Right ventricle myocardium inferior (tissue), 1 donor: ENCODE measurements at regions of chr4 and their contacts with region 1.

Region 1: DNA sequence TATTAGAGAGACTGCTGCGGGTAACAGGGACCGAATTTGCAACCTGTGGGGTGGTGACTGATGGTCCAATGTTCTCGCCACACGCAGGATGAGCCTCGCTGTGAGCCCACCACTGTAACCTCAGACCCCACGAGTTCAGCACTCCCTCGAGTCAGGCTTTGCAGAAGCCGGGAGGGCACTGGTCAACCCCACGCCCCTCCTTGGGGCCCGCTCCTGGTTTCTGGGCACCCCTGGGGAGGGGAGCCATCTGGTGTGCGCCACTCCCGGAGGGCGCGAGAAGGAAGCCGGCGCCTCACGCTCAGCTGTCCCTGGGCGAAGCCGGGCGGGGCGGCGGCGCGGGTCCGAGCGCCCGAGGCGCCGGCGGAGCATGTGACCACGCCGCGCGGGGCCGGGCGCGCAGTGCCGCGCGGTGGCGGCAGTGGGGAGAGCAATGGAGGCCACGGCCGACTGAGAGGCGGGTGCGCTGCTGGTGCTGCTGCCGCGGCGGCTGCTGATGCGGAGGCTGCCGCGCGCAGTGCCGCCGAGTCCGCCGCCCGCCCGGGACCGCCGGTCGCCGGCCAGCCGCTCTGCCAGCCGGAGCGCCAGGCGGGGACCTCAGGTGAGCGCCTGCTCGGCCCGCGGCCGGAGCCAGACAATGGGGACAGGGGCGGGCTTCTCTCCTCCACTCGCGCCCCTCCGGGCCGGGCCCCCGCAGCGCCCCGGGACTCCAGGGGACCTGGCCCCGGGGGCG is 100.1 kb downstream of the CEP135 start:
- DNase-seq: no peak
- ATAC-seq: peak; percentile 64

Region 2: GRCh38 chr4:55169352-55169961 is 879.4 kb before region 1 on chr4:
- intact Hi-C with region 1: no loop called
- DNase-seq: no peak
- ATAC-seq: no peak

Region 3: GRCh38 chr4:55424791-55425190 is 624.1 kb before region 1 on chr4:
- intact Hi-C with region 1: no loop called
- DNase-seq: no peak
- ATAC-seq: no peak

Region 4: GRCh38 chr4:56158483-56158882 is 109.6 kb after region 1 on chr4:
- intact Hi-C with region 1: no loop called
- DNase-seq: no peak
- ATAC-seq: no peak

Region 5: DNA sequence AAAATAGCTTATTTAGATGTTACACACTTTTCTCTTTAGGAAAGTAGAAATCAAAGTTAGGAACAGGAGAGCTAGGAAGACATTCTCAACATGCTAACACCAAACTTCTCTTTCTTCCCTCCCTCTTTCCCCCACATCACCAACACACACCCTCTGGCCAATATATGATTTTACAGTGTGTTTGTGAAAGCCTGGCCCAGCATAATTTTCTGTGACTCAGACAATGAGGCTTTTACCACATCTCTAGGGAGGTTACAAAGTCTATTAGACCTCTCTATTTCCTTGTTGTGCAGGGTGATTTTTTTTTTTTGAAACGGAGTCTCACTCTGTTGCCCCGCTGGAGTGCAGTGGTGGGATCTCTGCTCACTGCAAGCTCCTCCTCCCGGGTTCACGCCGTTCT is 148.5 kb after region 1 on chr4:
- intact Hi-C with region 1: no loop called
- DNase-seq: no peak
- ATAC-seq: no peak

Region 6: DNA sequence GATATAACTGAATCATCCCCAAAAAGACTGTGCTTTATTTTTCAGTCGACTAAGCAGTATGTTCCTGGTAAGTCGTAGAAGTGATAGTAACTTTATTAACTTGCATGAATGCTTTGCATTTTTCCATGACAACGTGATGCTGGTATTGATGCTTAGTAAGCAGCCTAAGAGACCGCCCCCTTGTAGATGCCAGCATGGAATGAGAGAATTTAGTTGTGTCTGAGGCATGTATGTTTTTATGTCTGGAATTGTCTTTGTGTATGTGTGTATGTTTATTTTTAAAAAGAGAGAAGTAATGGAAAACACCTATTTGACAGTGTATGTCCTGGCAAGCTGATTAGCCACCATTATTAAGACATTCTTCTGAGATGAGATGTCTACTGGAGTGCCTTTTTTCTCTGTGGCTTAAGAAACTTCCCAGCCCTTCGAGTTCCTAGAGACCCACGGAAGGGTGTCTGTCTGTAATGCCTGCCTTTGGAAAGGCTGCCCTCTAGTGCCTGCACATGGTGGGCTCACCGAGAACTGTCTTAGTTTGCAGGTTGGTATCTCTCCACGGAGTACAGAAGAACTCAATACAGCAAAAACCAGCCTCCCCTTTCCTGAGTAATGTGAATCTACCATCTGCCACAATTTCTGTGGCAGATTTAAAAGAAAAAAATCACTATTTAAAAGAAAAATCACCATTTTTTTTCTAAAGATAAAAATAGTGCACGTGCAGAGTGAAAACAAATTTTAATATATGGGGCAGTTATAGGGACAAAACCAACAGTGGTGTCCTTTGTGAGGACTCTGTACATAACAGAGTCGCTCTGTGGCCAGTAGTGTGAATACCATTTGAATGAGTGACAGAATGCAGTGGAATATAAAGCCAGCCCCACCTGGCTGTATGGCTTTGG is 252.6 kb after region 1 on chr4:
- intact Hi-C with region 1: loop called (anchors 10 kb)
- DNase-seq: peak; percentile 66
- ATAC-seq: peak; percentile 92